HepG2 (cell line): ENCODE measurements at regions of chr6 and their contacts with region 1.

Region 1: GRCh38 chr6:149545754-149546528 is at the start of gene PPIL4:
- DNase-seq: peak; percentile 89
- ATAC-seq: peak; percentile 88
- H3K4me3 ChIP-seq: peak within 1 kb of the TSS; percentile 87 to 97 (median 91)
- H3K27ac ChIP-seq: peak within 1 kb of the TSS; percentile 96
- H3K4me1 ChIP-seq: peaks cover 43% of the 10 kb centered on the region
- H3K27me3 ChIP-seq: no peaks in the 10 kb centered on the region; a peak in 2 of 5 replicates
- CTCF ChIP-seq: peak; percentile 85
- EP300 ChIP-seq: peak; percentile 56 to 71; a peak in 2 of 4 replicates
- POLR2A ChIP-seq: peak; percentile 81 to 93
- RAD21 ChIP-seq: peak; percentile 70
- total RNA-seq, gene PPIL4: 46.0 and 67.8 TPM in 2 replicates

Region 2: DNA sequence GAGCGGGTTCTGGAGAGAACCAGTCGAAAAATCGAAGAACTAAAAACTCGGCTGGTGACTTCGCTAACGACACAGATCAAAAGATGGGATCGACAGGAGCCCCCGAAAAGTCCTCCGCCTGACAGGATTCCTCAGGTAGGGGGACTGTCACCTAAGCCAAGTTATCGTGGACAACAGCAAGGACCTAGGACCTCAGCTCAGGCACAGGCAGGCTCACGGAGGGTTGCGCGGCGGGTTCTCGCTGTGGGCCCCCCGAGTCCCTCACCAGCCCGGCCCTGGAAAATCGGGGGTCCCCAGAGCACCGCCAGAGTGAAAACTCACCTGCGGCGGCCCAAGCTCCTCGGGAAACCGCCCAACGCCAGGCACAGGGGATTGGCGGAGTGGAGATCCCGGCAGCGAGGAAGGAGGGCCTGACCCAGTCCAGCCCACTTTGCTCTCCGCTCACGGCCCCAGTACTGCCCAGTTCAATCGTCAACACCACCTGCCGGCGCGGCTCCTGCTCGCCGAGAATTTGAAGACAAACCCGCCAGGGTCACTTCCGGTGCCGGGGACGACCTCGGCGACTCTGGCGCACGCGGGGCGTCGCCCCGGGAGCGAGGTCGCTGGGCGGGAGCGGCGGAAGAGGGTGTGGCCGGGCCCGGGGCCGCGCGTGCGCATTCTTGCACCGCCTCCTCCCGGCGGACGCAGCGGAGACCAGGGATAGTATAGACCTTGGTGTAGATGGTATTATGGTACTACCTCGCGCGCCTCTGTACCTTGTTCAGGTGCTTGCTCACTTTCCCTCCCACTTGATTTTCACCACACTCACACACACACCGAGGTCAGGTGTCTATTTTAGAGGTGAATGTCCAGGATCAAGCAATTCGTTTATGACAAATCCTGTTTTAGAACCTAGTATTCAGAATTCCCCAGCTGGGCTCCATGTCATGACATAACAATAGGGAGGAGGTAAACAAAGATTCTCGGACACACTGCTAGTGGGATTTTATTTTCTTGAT is 102.5 kb after region 1 on chr6 and contains the start of gene KATNA1:
- CTCF ChIA-PET with region 1: no interaction called
- POLR2A ChIA-PET with region 1: no interaction called
- in situ Hi-C with region 1: no loop called
- intact Hi-C with region 1: loop called (anchors 5 kb)
- DNase-seq: peak; percentile 96
- ATAC-seq: peak; percentile 98
- H3K4me3 ChIP-seq: peak within 1 kb of the TSS; percentile 74 to 85 (median 84)
- H3K27ac ChIP-seq: peak within 1 kb of the TSS; percentile 78
- H3K4me1 ChIP-seq: peaks cover 25% of the 10 kb centered on the region
- H3K27me3 ChIP-seq: no peaks in the 10 kb centered on the region; a peak in 1 of 5 replicates
- CTCF ChIP-seq: peak; percentile 68
- EP300 ChIP-seq: peak in 1 of 2 experiments; percentile 41; a peak in 1 of 4 replicates
- POLR2A ChIP-seq: peak; percentile 94 to 96
- RAD21 ChIP-seq: peak; percentile 71
- total RNA-seq, gene KATNA1: 25.3 and 31.2 TPM in 2 replicates